Activated CD4-positive, alpha-beta memory T cell treated with anti-CD3 and anti-CD28 coated beads for 36 hours (primary cell): ENCODE measurements at regions of chr12 and their contacts with region 1.

Region 1: DNA sequence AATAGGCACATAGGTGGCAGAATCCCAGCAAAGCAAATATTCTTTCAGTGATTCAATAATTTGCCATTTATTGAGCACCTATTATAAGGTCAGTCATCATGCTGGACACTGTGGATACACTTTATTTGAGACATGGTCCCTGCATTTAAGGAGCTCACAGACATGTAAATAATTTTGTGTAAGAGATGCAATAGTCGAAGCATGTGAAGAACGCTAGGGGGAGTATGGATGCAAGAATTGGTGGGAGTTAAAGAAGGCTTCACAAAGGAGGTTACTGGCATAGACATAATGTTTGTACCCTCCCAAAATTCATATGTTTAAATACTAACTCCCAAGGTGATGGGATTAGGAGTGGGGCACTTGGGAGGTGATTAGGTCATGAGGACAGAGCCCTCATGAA is 260.6 kb upstream of the GARIN6 start:
- DNase-seq: no peak
- H3K4me3 Mint-ChIP-seq: no peak overlapping the region
- H3K27ac Mint-ChIP-seq: no peak overlapping the region
- H3K4me1 Mint-ChIP-seq: no peaks in the 10 kb centered on the region
- H3K27me3 Mint-ChIP-seq: no peaks in the 10 kb centered on the region

Region 2: GRCh38 chr12:99619389-99620158 is 232.7 kb after region 1 on chr12:
- CTCF ChIA-PET with region 1: no interaction called
- POLR2A ChIA-PET with region 1: no interaction called
- intact Hi-C with region 1: loop called (anchors 5 kb)
- DNase-seq: no peak
- H3K4me3 Mint-ChIP-seq: no peak overlapping the region
- H3K27ac Mint-ChIP-seq: no peak overlapping the region
- H3K4me1 Mint-ChIP-seq: no peaks in the 10 kb centered on the region
- H3K27me3 Mint-ChIP-seq: no peaks in the 10 kb centered on the region